Mammary epithelial cell (primary cell): ENCODE measurements at regions of chr4 and their contacts with region 1.

Region 1: DNA sequence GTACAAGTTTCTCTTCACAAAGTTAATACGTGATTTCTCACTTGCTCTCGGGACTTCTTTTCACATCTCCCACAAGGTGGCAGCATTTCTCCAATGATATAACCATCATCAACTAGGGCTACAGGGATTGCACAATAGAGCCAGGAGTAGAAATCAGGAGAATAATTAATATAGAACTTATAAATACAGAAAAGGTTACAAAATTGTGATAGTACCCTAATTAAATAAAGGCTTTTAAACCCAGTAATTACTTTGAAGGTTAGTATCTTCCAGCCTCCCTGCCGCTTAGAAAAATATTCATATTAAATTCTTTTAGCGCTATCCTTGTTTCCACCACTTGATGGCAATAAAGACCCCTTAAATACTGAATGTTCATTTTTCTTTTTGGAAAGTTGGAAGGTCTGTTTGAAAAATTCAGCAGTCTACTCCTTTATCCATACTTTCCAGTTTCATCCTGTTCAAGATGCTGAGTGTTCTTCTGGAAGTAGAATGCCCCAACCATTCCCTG is 65.8 kb downstream of the RASGEF1B start:
- DNase-seq: peak; percentile 59
- H3K4me3 ChIP-seq: peak overlapping the region in 2 of 3 experiments; percentile 15 to 31
- H3K27ac ChIP-seq: no peak overlapping the region
- H3K4me1 ChIP-seq: no peaks in the 10 kb centered on the region
- H3K27me3 ChIP-seq: no peaks in the 10 kb centered on the region
- CTCF ChIP-seq: peak; percentile 47 to 55

Region 2: DNA sequence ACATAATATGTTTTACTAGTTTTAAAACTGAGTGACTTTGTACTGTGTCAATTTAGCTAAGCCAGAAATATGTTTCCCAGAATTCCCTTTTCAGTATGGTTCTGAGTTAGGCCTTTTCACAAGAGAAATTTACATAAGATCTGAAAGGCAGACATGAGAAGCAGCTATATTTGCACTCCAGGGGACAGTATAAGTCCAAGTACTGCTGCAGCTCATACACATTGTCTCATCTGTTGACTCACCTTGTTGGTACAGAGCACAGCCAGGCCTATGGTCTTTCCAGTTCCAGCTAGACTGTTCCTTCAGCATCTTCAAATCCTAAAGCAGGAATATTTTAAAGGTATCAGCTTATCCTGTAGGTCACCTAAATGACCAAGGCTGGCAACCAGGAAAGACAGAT is 321.9 kb before region 1 on chr4:
- CTCF ChIA-PET with region 1: no interaction called
- dilution Hi-C with region 1: no loop called
- in situ Hi-C with region 1: no loop called
- intact Hi-C with region 1: loop called (anchors 1 kb)
- DNase-seq: peak; percentile 68
- H3K4me3 ChIP-seq: no peak overlapping the region
- H3K27ac ChIP-seq: no peak overlapping the region
- H3K4me1 ChIP-seq: no peaks in the 10 kb centered on the region
- H3K27me3 ChIP-seq: no peaks in the 10 kb centered on the region
- CTCF ChIP-seq: peak; percentile 70 to 99

Region 3: DNA sequence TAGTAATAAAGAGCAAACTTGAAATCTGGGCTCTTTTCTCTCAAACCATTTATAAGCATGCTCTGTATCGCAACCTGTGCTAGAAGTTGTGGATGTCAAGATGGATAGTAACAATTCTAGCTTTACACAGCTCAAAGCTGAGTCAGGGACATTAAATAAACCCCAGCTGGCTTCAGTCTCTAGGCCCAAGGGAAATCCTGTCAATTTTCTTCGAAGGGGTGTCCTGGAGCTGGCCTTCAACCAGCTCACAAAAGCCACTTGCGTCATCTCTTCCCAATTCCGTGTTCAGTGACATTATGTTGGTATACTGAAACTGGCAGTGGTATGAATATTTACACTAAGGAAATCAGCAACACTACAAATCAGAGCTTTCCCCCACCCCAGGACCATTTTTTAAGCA is 101.1 kb before region 1 on chr4:
- CTCF ChIA-PET with region 1: no interaction called
- dilution Hi-C with region 1: no loop called
- in situ Hi-C with region 1: no loop called
- intact Hi-C with region 1: no loop called
- DNase-seq: no peak
- H3K4me3 ChIP-seq: no peak overlapping the region
- H3K27ac ChIP-seq: no peak overlapping the region
- H3K4me1 ChIP-seq: no peaks in the 10 kb centered on the region
- H3K27me3 ChIP-seq: peaks cover 2% of the 10 kb centered on the region
- CTCF ChIP-seq: no peak

Region 4: GRCh38 chr4:81688085-81688484 is 282.1 kb after region 1 on chr4:
- CTCF ChIA-PET with region 1: interaction called, 5 read pairs
- dilution Hi-C with region 1: no loop called
- in situ Hi-C with region 1: no loop called
- intact Hi-C with region 1: loop called (anchors 1 kb)
- DNase-seq: peak; percentile 6
- H3K4me3 ChIP-seq: no peak overlapping the region
- H3K27ac ChIP-seq: no peak overlapping the region
- H3K4me1 ChIP-seq: no peaks in the 10 kb centered on the region
- H3K27me3 ChIP-seq: no peaks in the 10 kb centered on the region
- CTCF ChIP-seq: peak in 1 of 2 donors; percentile 42

Region 5: GRCh38 chr4:81844717-81845116 is 438.8 kb after region 1 on chr4:
- CTCF ChIA-PET with region 1: no interaction called
- dilution Hi-C with region 1: no loop called
- in situ Hi-C with region 1: no loop called
- intact Hi-C with region 1: loop called (anchors 1 kb)
- DNase-seq: peak; percentile 76
- H3K4me3 ChIP-seq: no peak overlapping the region
- H3K27ac ChIP-seq: no peak overlapping the region
- H3K4me1 ChIP-seq: no peaks in the 10 kb centered on the region
- H3K27me3 ChIP-seq: no peaks in the 10 kb centered on the region
- CTCF ChIP-seq: peak; percentile 61 to 75

Region 6: GRCh38 chr4:82201805-82202641 is 796.1 kb after region 1 on chr4:
- CTCF ChIA-PET with region 1: no interaction called
- dilution Hi-C with region 1: no loop called
- in situ Hi-C with region 1: loop called in 1 of 2 experiments (anchors 10 kb)
- intact Hi-C with region 1: loop called (anchors 1 kb)
- DNase-seq: peak; percentile 29
- H3K4me3 ChIP-seq: no peak overlapping the region
- H3K27ac ChIP-seq: no peak overlapping the region
- H3K4me1 ChIP-seq: peaks cover 11% of the 10 kb centered on the region
- H3K27me3 ChIP-seq: no peaks in the 10 kb centered on the region
- CTCF ChIP-seq: peak; percentile 70 to 81

Region 7: GRCh38 chr4:82275431-82276331 is 869.7 kb after region 1 on chr4:
- CTCF ChIA-PET with region 1: no interaction called
- dilution Hi-C with region 1: no loop called
- in situ Hi-C with region 1: loop called in 1 of 2 experiments (anchors 10 kb)
- intact Hi-C with region 1: no loop called
- DNase-seq: peak; percentile 63
- H3K4me3 ChIP-seq: no peak overlapping the region
- H3K27ac ChIP-seq: no peak overlapping the region
- H3K4me1 ChIP-seq: no peaks in the 10 kb centered on the region
- H3K27me3 ChIP-seq: no peaks in the 10 kb centered on the region
- CTCF ChIP-seq: no peak